ENCODE measurements at regions of chr1 and their contacts with region 1.

Region 1: DNA sequence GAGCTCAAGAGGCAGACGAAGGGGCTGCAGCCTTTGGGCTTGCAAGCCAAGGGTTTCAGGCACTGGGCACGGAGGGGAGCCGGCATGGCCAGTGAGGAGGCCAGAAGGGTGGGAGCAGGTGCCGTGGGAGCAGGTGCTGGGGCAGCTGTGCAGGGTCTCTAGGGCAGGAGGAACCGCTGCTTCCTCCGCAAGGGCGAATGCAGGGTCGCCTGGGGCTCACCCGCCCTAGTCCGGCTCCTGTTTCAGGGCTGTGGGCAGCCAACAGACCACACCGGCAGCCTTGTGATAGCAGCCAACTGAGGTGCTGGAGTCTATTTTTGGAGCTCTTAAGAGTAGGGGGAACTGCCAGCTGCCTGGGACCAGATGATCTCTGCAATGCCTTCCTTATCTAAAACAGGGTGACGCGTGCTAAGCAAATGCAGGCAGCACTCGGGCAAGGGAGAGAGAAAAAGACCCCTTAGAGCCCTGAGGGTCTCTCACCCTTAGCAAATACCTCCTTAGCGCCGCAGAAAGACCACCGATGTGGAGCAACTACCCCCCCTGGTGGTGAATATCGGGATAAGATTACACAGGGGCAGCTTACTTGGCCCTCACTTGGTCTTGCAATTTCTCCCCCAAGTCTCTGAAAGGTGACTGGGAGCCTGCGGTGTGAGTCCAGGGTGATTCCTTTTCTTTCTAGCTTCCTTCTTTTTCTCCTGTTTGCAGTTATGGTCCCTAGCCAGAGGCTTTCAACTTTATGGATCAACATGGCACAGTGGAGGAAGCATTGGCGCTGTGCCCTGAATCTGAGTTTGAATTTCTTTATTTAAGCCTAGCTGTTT is 20.7 kb upstream of the MAPKAPK2 start:
- DNase-seq: peak; percentile 84
- ATAC-seq: peak; percentile 82
- H3K4me3 Mint-ChIP-seq: no peak overlapping the region
- H3K27ac Mint-ChIP-seq: no peak overlapping the region
- H3K4me1 Mint-ChIP-seq: peaks cover 33% of the 10 kb centered on the region
- H3K27me3 Mint-ChIP-seq: peaks cover 22% of the 10 kb centered on the region
- CTCF ChIP-seq: peak; percentile 92

Region 2: GRCh38 chr1:206461602-206462455 is 202.2 kb before region 1 on chr1:
- CTCF ChIA-PET with region 1: interaction called, 20 read pairs
- POLR2A ChIA-PET with region 1: no interaction called
- intact Hi-C with region 1: no loop called
- DNase-seq: peak; percentile 91
- ATAC-seq: peak; percentile 79
- H3K4me3 Mint-ChIP-seq: no peak overlapping the region
- H3K27ac Mint-ChIP-seq: no peak overlapping the region
- H3K4me1 Mint-ChIP-seq: peaks cover 40% of the 10 kb centered on the region
- H3K27me3 Mint-ChIP-seq: no peaks in the 10 kb centered on the region
- CTCF ChIP-seq: peak; percentile 89

Region 3: GRCh38 chr1:206507284-206508129 is 156.5 kb before region 1 on chr1 and contains the start of gene RASSF5:
- CTCF ChIA-PET with region 1: interaction called, 11 read pairs
- POLR2A ChIA-PET with region 1: no interaction called
- intact Hi-C with region 1: no loop called
- DNase-seq: peak; percentile 91
- ATAC-seq: peak; percentile 75
- H3K4me3 Mint-ChIP-seq: peak within 1 kb of the TSS; percentile 64
- H3K27ac Mint-ChIP-seq: peak within 1 kb of the TSS; percentile 10
- H3K4me1 Mint-ChIP-seq: peaks cover 46% of the 10 kb centered on the region
- H3K27me3 Mint-ChIP-seq: peaks cover 28% of the 10 kb centered on the region
- CTCF ChIP-seq: no peak
- total RNA-seq, gene RASSF5: 215 to 218 TPM

Region 4: GRCh38 chr1:206600527-206600926 is 63.5 kb before region 1 on chr1:
- CTCF ChIA-PET with region 1: interaction called, 21 read pairs
- POLR2A ChIA-PET with region 1: interaction called, 4 read pairs
- intact Hi-C with region 1: loop called (anchors 10 kb)
- DNase-seq: no peak
- ATAC-seq: no peak
- H3K4me3 Mint-ChIP-seq: no peak overlapping the region
- H3K27ac Mint-ChIP-seq: no peak overlapping the region
- H3K4me1 Mint-ChIP-seq: peaks cover 2% of the 10 kb centered on the region
- H3K27me3 Mint-ChIP-seq: no peaks in the 10 kb centered on the region
- CTCF ChIP-seq: no peak

Region 5: GRCh38 chr1:206674745-206675175 is 10.7 kb after region 1 on chr1:
- CTCF ChIA-PET with region 1: interaction called, 72 read pairs
- POLR2A ChIA-PET with region 1: interaction called, 4 read pairs
- intact Hi-C with region 1: no loop called
- DNase-seq: no peak
- ATAC-seq: no peak
- H3K4me3 Mint-ChIP-seq: no peak overlapping the region
- H3K27ac Mint-ChIP-seq: no peak overlapping the region
- H3K4me1 Mint-ChIP-seq: peaks cover 10% of the 10 kb centered on the region
- H3K27me3 Mint-ChIP-seq: no peaks in the 10 kb centered on the region
- CTCF ChIP-seq: no peak

Region 6: DNA sequence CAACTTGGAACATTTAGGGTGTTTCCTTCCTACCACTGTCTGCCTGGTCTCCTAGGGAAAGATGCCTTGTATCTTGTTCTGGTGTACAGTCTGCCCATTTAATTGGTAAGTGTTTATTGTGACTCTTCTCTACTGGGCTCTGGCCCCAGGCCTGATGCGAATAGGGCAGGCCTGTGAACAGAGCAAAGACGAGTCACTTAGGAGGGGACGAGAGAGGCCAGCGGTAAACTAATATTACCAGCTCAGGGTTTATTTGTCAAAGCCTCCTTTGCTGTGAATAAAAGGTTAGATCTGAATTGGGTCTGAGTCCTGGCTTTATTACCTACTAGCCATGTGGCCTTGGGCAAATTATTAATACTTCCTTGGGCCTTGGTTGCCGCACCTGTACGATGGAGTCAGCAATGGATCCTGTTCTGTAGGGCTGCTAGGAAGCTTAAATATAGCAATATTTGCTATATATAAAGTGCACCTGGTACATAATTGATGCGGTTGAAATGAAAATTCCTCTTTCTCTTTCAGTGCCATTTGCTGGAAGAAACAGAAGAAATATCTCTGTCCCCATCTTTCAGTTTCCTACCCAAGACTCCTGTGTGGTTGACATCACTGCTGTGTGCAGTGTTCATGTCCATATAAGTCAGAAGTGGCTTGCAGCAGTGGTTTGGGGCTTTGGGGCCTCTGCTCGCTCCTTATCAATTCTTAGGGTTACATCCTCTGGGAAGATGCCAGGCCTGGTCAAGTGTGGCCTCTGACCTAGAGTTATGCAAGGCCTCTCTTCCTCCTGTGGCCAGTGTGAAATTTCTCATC is 53.0 kb after region 1 on chr1:
- CTCF ChIA-PET with region 1: interaction called, 10 read pairs
- POLR2A ChIA-PET with region 1: no interaction called
- intact Hi-C with region 1: no loop called
- DNase-seq: peak; percentile 43
- ATAC-seq: peak; percentile 61
- H3K4me3 Mint-ChIP-seq: peak overlapping the region; percentile 15
- H3K27ac Mint-ChIP-seq: peak overlapping the region; percentile 79
- H3K4me1 Mint-ChIP-seq: peaks cover 81% of the 10 kb centered on the region
- H3K27me3 Mint-ChIP-seq: no peaks in the 10 kb centered on the region
- CTCF ChIP-seq: no peak